ENCODE measurements at regions of chr19 and their contacts with region 1.

Region 1: DNA sequence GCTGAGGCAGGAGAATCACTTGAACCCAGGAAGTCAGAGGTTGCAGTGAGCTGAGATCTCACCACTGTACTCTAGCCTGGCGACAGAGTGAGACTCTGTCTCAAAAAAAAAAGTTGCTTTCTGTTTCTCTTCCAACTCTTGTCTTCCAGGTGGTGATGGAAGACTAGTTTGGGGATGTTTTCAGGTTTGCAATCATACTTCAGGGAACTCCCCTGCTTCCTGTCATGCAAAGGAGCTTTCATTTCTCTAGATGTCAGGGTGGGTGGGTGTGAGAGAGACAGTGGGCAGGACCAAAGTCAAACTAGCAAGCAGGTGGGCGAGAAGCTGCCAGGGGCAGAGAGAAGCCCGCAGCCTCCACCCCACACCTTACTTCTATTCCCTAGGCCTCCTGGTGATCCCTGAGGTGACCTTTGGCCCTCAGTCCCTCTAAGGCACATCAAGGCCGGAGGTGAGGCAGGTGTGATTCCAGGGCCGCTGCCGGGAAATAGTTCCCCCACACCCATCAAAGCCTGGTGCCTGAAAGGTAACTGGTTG is 25.7 kb downstream of the CCNE1 start:
- DNase-seq: peak; percentile 89
- H3K4me3 Mint-ChIP-seq: peak overlapping the region; percentile 77
- H3K27ac Mint-ChIP-seq: peak overlapping the region; percentile 98
- H3K4me1 Mint-ChIP-seq: peaks cover 57% of the 10 kb centered on the region
- H3K27me3 Mint-ChIP-seq: no peaks in the 10 kb centered on the region

Region 2: GRCh38 chr19:29492769-29493168 is 344.7 kb before region 1 on chr19:
- intact Hi-C with region 1: no loop called
- DNase-seq: no peak
- H3K4me3 Mint-ChIP-seq: no peak overlapping the region
- H3K27ac Mint-ChIP-seq: no peak overlapping the region
- H3K4me1 Mint-ChIP-seq: no peaks in the 10 kb centered on the region
- H3K27me3 Mint-ChIP-seq: peaks cover 25% of the 10 kb centered on the region

Region 3: GRCh38 chr19:29587518-29587986 is 250.0 kb before region 1 on chr19:
- intact Hi-C with region 1: loop called (anchors 10 kb)
- DNase-seq: peak; percentile 93
- H3K4me3 Mint-ChIP-seq: peak overlapping the region; percentile 39
- H3K27ac Mint-ChIP-seq: peak overlapping the region; percentile 78
- H3K4me1 Mint-ChIP-seq: peaks cover 29% of the 10 kb centered on the region
- H3K27me3 Mint-ChIP-seq: peaks cover 21% of the 10 kb centered on the region

Region 4: GRCh38 chr19:29672933-29673336 is 164.6 kb before region 1 on chr19:
- intact Hi-C with region 1: loop called (anchors 1 kb)
- DNase-seq: peak; percentile 92
- H3K4me3 Mint-ChIP-seq: peak overlapping the region; percentile 95
- H3K27ac Mint-ChIP-seq: peak overlapping the region; percentile 95
- H3K4me1 Mint-ChIP-seq: peaks cover 62% of the 10 kb centered on the region
- H3K27me3 Mint-ChIP-seq: no peaks in the 10 kb centered on the region

Region 5: DNA sequence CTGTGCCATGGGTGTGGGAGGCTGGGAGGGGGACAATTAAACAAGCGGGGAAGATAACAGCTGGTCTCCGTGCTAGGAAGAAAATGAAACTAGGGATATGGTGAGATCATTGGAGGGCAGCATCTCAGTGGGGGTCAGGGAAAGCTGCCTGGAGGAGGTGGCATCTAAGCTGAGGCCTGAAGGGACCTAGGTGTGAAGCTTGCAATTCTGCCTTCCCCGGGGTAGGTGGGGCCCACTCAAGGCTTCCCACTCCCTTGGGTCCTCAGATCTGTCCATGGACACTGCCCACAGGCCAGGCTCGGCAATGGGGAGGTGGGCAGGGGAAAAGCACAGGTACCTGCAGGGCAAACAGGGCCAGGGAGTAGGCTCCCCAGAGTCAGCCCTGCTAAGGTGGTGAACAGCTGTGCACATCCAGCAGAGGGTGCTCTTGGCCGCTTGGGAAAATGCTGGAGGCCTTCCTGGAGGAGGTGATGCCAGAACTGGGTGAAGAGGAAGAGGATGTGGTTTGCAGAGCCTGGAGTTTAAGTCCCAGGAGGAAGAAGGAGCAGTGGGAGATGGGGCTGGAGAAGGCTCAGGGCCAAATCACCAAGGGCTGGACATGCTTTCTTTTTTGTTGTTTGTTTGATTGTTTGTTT is 51.4 kb before region 1 on chr19:
- intact Hi-C with region 1: no loop called
- DNase-seq: peak; percentile 75
- H3K4me3 Mint-ChIP-seq: no peak overlapping the region
- H3K27ac Mint-ChIP-seq: no peak overlapping the region
- H3K4me1 Mint-ChIP-seq: peaks cover 6% of the 10 kb centered on the region
- H3K27me3 Mint-ChIP-seq: no peaks in the 10 kb centered on the region

Region 6: DNA sequence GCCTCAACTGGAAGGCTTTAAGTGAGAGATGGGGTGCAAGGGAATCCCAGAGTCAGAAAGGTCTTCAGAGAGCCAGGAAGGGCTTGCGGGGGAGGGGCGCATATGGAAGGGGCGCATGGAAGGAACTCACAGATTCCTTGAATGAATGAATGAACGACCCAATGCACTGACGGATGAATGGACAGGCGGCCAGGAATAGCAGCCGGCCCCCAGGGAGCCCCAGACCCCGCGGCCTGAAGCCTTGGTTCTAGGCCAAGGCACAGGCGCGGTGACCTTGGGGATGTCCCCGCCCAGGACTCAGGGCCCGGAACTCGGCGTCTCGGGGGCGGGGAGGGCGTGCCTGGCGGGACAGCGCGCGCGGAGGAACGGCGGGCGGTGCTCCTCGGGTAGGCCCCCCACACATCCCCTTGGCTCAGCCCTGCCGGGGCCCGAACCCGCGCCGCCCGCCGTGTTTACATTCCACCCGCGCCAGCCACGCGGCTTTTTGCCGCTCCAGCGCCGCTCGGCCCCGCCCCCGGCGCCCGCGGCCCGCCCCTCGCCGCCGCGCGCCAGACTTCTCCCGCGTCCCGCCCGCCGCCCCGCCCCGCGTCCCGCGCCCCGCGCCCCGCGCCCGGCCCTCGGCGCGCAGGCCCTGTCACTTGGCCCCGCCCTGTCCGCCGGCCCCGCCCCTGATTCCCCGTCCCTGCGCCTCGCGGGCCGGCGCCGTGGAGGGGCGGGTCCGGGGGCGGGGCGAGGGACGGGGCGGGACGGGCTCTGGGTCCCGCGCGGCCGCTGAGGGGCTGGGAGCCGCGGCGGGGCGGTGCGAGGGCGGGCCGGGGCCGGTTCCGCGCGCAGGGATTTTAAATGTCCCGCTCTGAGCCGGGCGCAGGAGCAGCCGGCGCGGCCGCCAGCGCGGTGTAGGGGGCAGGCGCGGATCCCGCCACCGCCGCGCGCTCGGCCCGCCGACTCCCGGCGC is 26.1 kb before region 1 on chr19 and contains the start of gene CCNE1:
- intact Hi-C with region 1: loop called (anchors 2 kb)
- DNase-seq: peak; percentile 98
- H3K4me3 Mint-ChIP-seq: peak within 1 kb of the TSS; percentile 93
- H3K27ac Mint-ChIP-seq: peak within 1 kb of the TSS; percentile 93
- H3K4me1 Mint-ChIP-seq: peaks cover 27% of the 10 kb centered on the region
- H3K27me3 Mint-ChIP-seq: no peaks in the 10 kb centered on the region
- total RNA-seq, gene CCNE1: 54.5 and 55.8 TPM in 2 replicates

Region 7: GRCh38 chr19:29851769-29852521 is 14.4 kb after region 1 on chr19:
- intact Hi-C with region 1: loop called (anchors 2 kb)
- DNase-seq: no peak
- H3K4me3 Mint-ChIP-seq: no peak overlapping the region
- H3K27ac Mint-ChIP-seq: peak overlapping the region; percentile 69
- H3K4me1 Mint-ChIP-seq: peaks cover 13% of the 10 kb centered on the region
- H3K27me3 Mint-ChIP-seq: no peaks in the 10 kb centered on the region

Region 8: GRCh38 chr19:29941828-29942403 is 104.4 kb after region 1 on chr19 and contains the start of gene URI1:
- intact Hi-C with region 1: loop called (anchors 2 kb)
- DNase-seq: peak; percentile 99
- H3K4me3 Mint-ChIP-seq: peak within 1 kb of the TSS; percentile 88
- H3K27ac Mint-ChIP-seq: peak within 1 kb of the TSS; percentile 91
- H3K4me1 Mint-ChIP-seq: peaks cover 27% of the 10 kb centered on the region
- H3K27me3 Mint-ChIP-seq: peaks cover 3% of the 10 kb centered on the region
- total RNA-seq, gene URI1: 60.0 and 64.3 TPM in 2 replicates

Measured in activated CD4-positive, alpha-beta T cell treated with anti-CD3 and anti-CD28 coated beads, Interleukin-2, amount 10 ng/mL, durations not matched to agents 24 days and 14 days (primary cell).